Endothelial cell of umbilical vein (primary cell): ENCODE measurements at regions of chr19 and their contacts with region 1.

Region 1: DNA sequence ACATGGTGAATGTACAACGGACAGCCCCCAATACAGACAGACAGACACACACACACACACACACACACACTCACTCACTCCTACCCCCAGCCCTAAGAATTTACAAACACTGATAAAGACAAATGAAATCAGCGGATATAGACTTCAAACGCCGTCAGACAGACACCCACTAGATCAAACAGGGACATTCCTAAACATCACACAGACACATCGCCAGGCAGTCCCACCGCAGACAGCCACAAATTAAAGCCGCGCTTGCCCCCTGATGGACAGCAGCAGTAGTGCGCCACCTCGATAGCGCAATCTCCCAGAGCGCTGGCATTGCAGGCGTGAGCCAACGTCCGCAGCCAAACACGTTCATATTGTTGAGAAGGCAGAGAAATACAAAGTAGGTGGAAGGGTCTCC is 24.7 kb upstream of the ADGRE1 start:
- DNase-seq: peak; percentile 78
- H3K4me3 ChIP-seq: no peak overlapping the region
- H3K27ac ChIP-seq: no peak overlapping the region
- H3K4me1 ChIP-seq: no peaks in the 10 kb centered on the region
- H3K27me3 ChIP-seq: no peaks in the 10 kb centered on the region
- CTCF ChIP-seq: peak; percentile 90 to 95
- POLR2A ChIP-seq: no peak

Region 2: GRCh38 chr19:6460101-6460853 is 402.4 kb before region 1 on chr19:
- CTCF ChIA-PET with region 1: interaction called, 3 read pairs
- POLR2A ChIA-PET with region 1: no interaction called
- dilution Hi-C with region 1: no loop called
- intact Hi-C with region 1: loop called (anchors 5 kb)
- DNase-seq: peak; percentile 95
- H3K4me3 ChIP-seq: peak overlapping the region; percentile 54 to 72 (median 58)
- H3K27ac ChIP-seq: no peak overlapping the region
- H3K4me1 ChIP-seq: peaks cover 7% of the 10 kb centered on the region
- H3K27me3 ChIP-seq: peaks cover 7 to 15% of the 10 kb centered on the region in 2 experiments
- CTCF ChIP-seq: peak; percentile 63 to 65
- POLR2A ChIP-seq: no peak

Region 3: GRCh38 chr19:6516659-6517291 is 345.9 kb before region 1 on chr19:
- CTCF ChIA-PET with region 1: interaction called, 60 read pairs
- POLR2A ChIA-PET with region 1: no interaction called
- dilution Hi-C with region 1: no loop called
- intact Hi-C with region 1: loop called (anchors 1 kb)
- DNase-seq: peak; percentile 74
- H3K4me3 ChIP-seq: peak overlapping the region; percentile 14 to 53 (median 41)
- H3K27ac ChIP-seq: peak overlapping the region; percentile 14
- H3K4me1 ChIP-seq: peaks cover 4% of the 10 kb centered on the region
- H3K27me3 ChIP-seq: no peaks in the 10 kb centered on the region
- CTCF ChIP-seq: peak; percentile 97
- POLR2A ChIP-seq: no peak

Region 4: DNA sequence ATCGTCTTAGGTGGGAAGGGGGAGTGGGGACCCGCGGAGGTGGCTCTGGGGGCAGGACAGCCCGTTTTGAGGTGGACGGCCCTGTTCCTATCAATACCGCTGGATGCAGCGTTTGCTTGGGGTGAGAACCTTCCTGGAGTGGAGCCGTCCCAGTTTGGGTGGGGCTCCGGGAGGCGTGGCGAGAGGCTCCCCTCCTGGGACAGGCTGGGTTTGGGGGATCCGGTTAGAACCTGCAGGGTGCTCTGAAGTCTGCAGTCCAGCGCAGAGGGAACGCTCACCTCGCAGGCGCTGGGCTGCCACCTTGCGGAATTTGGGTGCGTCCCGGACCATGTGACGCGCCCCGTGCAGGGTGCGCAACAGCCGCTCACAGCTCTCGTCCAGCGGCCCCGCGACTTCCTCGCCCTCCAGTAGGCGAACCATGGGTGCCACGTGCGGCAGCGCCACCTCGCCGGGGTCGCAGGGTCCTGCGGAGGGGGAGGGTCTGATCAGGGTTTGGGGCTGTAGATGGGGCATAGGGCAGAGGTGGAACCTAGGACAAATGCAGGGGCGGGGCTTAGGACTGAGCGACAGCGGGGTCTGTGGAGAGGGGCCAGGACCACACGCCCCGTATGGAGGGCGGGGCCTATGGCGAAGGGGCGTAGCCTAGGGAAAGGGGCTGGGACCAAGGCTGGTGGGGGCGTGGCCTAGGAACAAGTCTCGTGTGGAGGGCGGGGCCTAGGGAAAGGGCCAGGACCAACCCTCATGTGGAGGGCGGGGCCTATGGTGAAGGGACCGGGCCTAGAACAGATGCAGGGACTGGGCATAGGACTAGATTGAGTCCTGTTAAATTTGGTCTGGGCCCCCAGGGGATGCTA is 109.3 kb before region 1 on chr19:
- CTCF ChIA-PET with region 1: interaction called, 5 read pairs
- POLR2A ChIA-PET with region 1: no interaction called
- dilution Hi-C with region 1: no loop called
- intact Hi-C with region 1: loop called (anchors 1 kb)
- DNase-seq: peak; percentile 82
- H3K4me3 ChIP-seq: peak overlapping the region; percentile 30 to 56 (median 31)
- H3K27ac ChIP-seq: no peak overlapping the region
- H3K4me1 ChIP-seq: peaks cover 8% of the 10 kb centered on the region
- H3K27me3 ChIP-seq: no peaks in the 10 kb centered on the region
- CTCF ChIP-seq: peak; percentile 21 to 42
- POLR2A ChIP-seq: no peak

Region 5: DNA sequence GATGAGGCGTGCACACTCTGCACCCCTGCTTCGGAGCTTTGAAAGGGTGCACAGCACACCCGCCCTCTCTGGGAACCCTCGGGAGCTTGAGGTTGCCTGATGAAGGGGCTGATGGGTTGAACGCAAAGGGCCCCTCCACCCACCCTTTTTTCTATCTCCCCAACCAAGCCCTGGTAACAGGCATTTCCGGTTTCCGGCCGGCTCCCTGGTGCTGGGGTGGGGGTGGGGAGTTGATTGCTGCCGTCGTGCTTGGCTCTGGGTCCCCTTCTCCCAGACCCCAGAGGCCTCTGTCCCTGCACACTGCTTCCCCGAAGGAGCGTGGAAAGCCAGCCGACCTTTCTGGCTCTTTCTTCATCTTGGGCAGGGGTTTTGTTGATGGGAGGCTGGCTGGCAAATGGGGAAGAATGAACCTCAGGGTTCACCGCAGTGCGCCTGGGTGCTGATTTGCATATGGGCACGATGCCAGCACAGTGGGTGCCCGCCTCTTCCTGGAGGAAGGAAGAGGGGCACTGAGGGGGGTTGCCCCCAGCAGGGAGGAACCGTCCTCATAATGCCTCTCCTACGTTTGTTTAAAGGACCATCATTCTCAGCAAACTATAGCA is 61.1 kb before region 1 on chr19:
- CTCF ChIA-PET with region 1: interaction called, 7 read pairs
- POLR2A ChIA-PET with region 1: no interaction called
- dilution Hi-C with region 1: no loop called
- intact Hi-C with region 1: loop called (anchors 1 kb)
- DNase-seq: peak; percentile 9
- H3K4me3 ChIP-seq: peak overlapping the region in 2 of 3 experiments; percentile 3 to 15
- H3K27ac ChIP-seq: peak overlapping the region; percentile 38
- H3K4me1 ChIP-seq: peaks cover 18% of the 10 kb centered on the region
- H3K27me3 ChIP-seq: no peaks in the 10 kb centered on the region
- CTCF ChIP-seq: no peak
- POLR2A ChIP-seq: no peak

Region 6: DNA sequence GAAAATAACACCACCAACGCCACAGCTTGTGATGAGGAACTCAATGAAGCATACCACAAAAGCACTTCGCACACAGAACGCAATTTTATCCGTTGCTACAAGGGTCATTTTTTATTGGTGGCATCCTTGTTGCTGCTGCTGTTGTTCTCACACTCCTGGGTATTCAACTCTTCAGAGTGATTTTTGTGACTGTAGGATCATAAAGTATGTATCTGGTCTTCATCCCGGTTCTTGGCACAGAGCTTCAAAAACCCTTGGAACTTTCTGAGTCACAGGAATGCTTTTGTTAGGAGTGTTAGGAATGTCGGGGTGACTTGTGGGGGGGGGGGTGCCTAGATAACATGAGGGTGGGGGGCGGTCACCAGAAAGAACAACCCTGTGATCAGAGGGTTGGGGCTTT is 315.2 kb after region 1 on chr19:
- CTCF ChIA-PET with region 1: no interaction called
- POLR2A ChIA-PET with region 1: no interaction called
- dilution Hi-C with region 1: no loop called
- intact Hi-C with region 1: no loop called
- DNase-seq: no peak
- H3K4me3 ChIP-seq: no peak overlapping the region
- H3K27ac ChIP-seq: no peak overlapping the region
- H3K4me1 ChIP-seq: peaks cover 6% of the 10 kb centered on the region
- H3K27me3 ChIP-seq: no peaks in the 10 kb centered on the region
- CTCF ChIP-seq: no peak
- POLR2A ChIP-seq: no peak